ENCODE measurements at regions of chr13 and their contacts with region 1.

Region 1: DNA sequence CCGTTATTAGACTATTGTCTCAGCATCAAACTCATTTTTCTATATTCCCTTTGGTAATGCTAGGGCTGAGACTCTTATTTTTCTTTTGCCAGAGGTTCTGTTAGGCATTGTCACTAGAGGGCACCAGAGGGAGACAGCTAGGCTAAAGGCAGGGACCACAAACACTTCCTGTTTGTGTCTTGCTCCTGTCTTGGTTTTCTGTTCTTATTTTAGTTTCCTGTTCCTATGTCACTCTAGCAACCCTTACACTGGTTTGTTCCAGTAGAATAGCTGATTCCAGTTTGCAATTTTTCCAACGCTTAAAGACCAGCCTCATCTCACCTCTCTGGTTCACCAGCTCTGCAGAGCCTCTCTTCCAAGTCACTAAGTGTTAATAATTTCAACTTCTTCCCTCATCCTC is 772.0 kb downstream of the DIAPH3 start:
- DNase-seq: peak in 1 of 2 donors; percentile 49
- ATAC-seq: peak; percentile 80
- H3K4me3 ChIP-seq: no peak overlapping the region
- H3K27ac ChIP-seq: no peak overlapping the region
- H3K4me1 ChIP-seq: no peaks in the 10 kb centered on the region
- H3K27me3 ChIP-seq: no peaks in the 10 kb centered on the region

Region 2: GRCh38 chr13:59337070-59337469 is 54.6 kb before region 1 on chr13:
- intact Hi-C with region 1: no loop called
- DNase-seq: no peak
- ATAC-seq: no peak
- H3K4me3 ChIP-seq: no peak overlapping the region
- H3K27ac ChIP-seq: no peak overlapping the region
- H3K4me1 ChIP-seq: no peaks in the 10 kb centered on the region
- H3K27me3 ChIP-seq: peaks cover 0 to 1% of the 10 kb centered on the region in 2 donors

Region 3: GRCh38 chr13:59677966-59678814 is 286.5 kb after region 1 on chr13:
- intact Hi-C with region 1: loop called in 1 of 2 experiments (anchors 10 kb)
- DNase-seq: no peak
- ATAC-seq: no peak
- H3K4me3 ChIP-seq: no peak overlapping the region
- H3K27ac ChIP-seq: no peak overlapping the region
- H3K4me1 ChIP-seq: no peaks in the 10 kb centered on the region
- H3K27me3 ChIP-seq: no peaks in the 10 kb centered on the region

Measured in aorta (tissue), 5 donors.